Mucosa of descending colon (tissue), 3 donors: ENCODE measurements at regions of chr14 and their contacts with region 1.

Region 1: GRCh38 chr14:21557084-21557901 is 22.6 kb downstream of the OR10G3 start:
- DNase-seq: peak in 2 of 3 donors; percentile 39 to 94
- ATAC-seq: peak; percentile 92
- H3K4me3 ChIP-seq: no peak overlapping the region
- H3K4me1 ChIP-seq: peaks cover 4% of the 10 kb centered on the region
- CTCF ChIP-seq: peak; percentile 38

Region 2: GRCh38 chr14:21498553-21499526 is 58.5 kb before region 1 on chr14:
- intact Hi-C with region 1: loop called in 1 of 2 experiments (anchors 10 kb)
- DNase-seq: peak in 1 of 3 donors; percentile 56
- ATAC-seq: peak; percentile 68
- H3K4me3 ChIP-seq: no peak overlapping the region
- H3K4me1 ChIP-seq: no peaks in the 10 kb centered on the region
- CTCF ChIP-seq: no peak

Region 3: DNA sequence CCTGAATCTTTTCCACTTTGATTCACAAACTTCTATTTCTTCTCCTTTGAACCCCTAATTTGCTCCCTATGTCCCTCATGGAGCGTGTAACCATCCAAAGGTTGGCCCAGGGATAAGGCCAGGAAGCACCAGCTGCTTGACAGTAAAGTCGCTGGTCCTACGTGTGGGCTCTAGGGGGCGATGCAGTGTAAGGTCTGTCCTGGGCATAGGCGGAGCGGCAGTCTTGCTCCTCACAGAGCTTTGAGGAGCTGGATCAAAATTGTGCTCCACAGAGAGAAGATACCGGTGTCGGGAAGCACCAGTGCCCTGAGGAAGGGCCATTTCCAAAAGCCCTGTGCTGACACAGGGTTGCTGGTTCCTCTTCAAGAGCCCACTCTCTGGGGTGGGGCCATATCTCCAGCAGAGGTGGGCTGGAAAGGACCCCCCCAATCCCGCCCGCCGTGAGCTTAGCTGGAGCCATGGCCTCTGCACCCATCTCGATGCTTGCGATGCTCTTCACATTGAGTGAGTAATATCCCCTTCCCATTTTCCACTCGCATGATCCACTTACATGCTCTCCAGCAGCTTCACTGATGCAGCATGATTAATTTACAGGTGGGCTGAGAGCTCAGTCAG is 166.2 kb after region 1 on chr14:
- intact Hi-C with region 1: no loop called
- DNase-seq: peak; percentile 26 to 53 (median 40)
- ATAC-seq: peak; percentile 86
- H3K4me3 ChIP-seq: no peak overlapping the region
- H3K4me1 ChIP-seq: peaks cover 6% of the 10 kb centered on the region
- CTCF ChIP-seq: no peak